HepG2 (cell line): ENCODE measurements at regions of chr3 and their contacts with region 1.

Region 1: GRCh38 chr3:107429320-107430181 is 52.3 kb downstream of the CCDC54 start:
- DNase-seq: peak; percentile 56
- ATAC-seq: peak; percentile 87
- H3K4me3 ChIP-seq: peak overlapping the region in 1 of 3 experiments; percentile 31; a peak in 1 of 6 replicates
- H3K27ac ChIP-seq: no peak overlapping the region
- H3K4me1 ChIP-seq: peaks cover 27% of the 10 kb centered on the region
- H3K27me3 ChIP-seq: peaks cover 0 to 25% of the 10 kb centered on the region in 2 experiments; a peak in 3 of 5 replicates
- CTCF ChIP-seq: peak; percentile 81
- EP300 ChIP-seq: no peak
- POLR2A ChIP-seq: no peak
- RAD21 ChIP-seq: peak; percentile 39; the same call in 1 of the 2 replicates

Region 2: DNA sequence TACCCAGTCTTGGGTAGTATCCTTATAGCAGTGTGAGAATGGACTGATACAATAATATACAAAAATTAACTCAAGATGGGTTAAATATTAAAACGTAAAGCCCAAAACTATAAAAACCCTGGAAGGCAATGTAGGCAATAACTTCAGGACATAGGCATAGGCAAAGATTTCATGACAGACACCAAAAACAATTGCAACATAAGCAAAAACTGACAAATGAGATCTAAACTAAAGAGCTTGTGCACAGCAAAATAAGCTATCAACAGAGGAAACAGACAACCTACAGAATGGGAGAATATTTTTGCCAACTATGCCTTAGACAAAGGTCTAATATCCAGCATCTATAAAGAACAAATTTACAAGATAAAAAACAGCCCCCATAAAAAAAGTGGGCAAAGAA is 257.1 kb before region 1 on chr3:
- CTCF ChIA-PET with region 1: no interaction called
- POLR2A ChIA-PET with region 1: no interaction called
- in situ Hi-C with region 1: no loop called
- intact Hi-C with region 1: no loop called
- DNase-seq: no peak
- ATAC-seq: no peak
- H3K4me3 ChIP-seq: no peak overlapping the region
- H3K27ac ChIP-seq: no peak overlapping the region
- H3K4me1 ChIP-seq: no peaks in the 10 kb centered on the region
- H3K27me3 ChIP-seq: no peaks in the 10 kb centered on the region
- CTCF ChIP-seq: no peak
- EP300 ChIP-seq: no peak
- POLR2A ChIP-seq: no peak
- RAD21 ChIP-seq: no peak

Region 3: GRCh38 chr3:107271787-107272387 is 157.7 kb before region 1 on chr3:
- CTCF ChIA-PET with region 1: interaction called, 4 read pairs
- POLR2A ChIA-PET with region 1: no interaction called
- in situ Hi-C with region 1: loop called (anchors 10 kb)
- intact Hi-C with region 1: loop called (anchors 2 kb)
- DNase-seq: peak; percentile 18
- ATAC-seq: peak; percentile 73
- H3K4me3 ChIP-seq: no peak overlapping the region
- H3K27ac ChIP-seq: no peak overlapping the region
- H3K4me1 ChIP-seq: no peaks in the 10 kb centered on the region
- H3K27me3 ChIP-seq: no peaks in the 10 kb centered on the region; a peak in 1 of 5 replicates
- CTCF ChIP-seq: peak; percentile 62
- EP300 ChIP-seq: no peak
- POLR2A ChIP-seq: no peak
- RAD21 ChIP-seq: no peak

Region 4: GRCh38 chr3:107522510-107523288 is 93.1 kb after region 1 on chr3 and contains the start of gene BBX:
- CTCF ChIA-PET with region 1: no interaction called
- POLR2A ChIA-PET with region 1: no interaction called
- in situ Hi-C with region 1: no loop called
- intact Hi-C with region 1: loop called (anchors 2 kb)
- DNase-seq: peak; percentile 88
- ATAC-seq: peak; percentile 95
- H3K4me3 ChIP-seq: peak within 1 kb of the TSS; percentile 80 to 91 (median 86)
- H3K27ac ChIP-seq: peak within 1 kb of the TSS; percentile 82
- H3K4me1 ChIP-seq: peaks cover 20% of the 10 kb centered on the region
- H3K27me3 ChIP-seq: no peaks in the 10 kb centered on the region; a peak in 2 of 5 replicates
- CTCF ChIP-seq: no peak
- EP300 ChIP-seq: no peak
- POLR2A ChIP-seq: peak; percentile 52 to 74
- RAD21 ChIP-seq: 0 out of 2 replicates have a peak, but pooled peaks have one; percentile 18
- total RNA-seq, gene BBX: 13.7 and 20.6 TPM in 2 replicates